ENCODE measurements at regions of chr22 and their contacts with region 1.

Region 1: GRCh38 chr22:31734512-31734911 is 15.4 kb downstream of the PRR14L start:
- DNase-seq: no peak
- H3K4me3 ChIP-seq: no peak overlapping the region
- H3K27ac ChIP-seq: no peak overlapping the region
- H3K4me1 ChIP-seq: no peaks in the 10 kb centered on the region
- H3K27me3 ChIP-seq: no peaks in the 10 kb centered on the region
- CTCF ChIP-seq: no peak

Region 2: GRCh38 chr22:31399211-31400028 is 335.1 kb before region 1 on chr22 and contains the start of gene DRG1:
- CTCF ChIA-PET with region 1: no interaction called
- POLR2A ChIA-PET with region 1: no interaction called
- intact Hi-C with region 1: no loop called
- DNase-seq: peak; percentile 98
- H3K4me3 ChIP-seq: peak within 1 kb of the TSS; percentile 91
- H3K27ac ChIP-seq: peak within 1 kb of the TSS; percentile 94
- H3K4me1 ChIP-seq: peaks cover 6% of the 10 kb centered on the region
- H3K27me3 ChIP-seq: no peaks in the 10 kb centered on the region
- CTCF ChIP-seq: no peak
- total RNA-seq, gene DRG1: 115 and 116 TPM in 2 replicates

Region 3: DNA sequence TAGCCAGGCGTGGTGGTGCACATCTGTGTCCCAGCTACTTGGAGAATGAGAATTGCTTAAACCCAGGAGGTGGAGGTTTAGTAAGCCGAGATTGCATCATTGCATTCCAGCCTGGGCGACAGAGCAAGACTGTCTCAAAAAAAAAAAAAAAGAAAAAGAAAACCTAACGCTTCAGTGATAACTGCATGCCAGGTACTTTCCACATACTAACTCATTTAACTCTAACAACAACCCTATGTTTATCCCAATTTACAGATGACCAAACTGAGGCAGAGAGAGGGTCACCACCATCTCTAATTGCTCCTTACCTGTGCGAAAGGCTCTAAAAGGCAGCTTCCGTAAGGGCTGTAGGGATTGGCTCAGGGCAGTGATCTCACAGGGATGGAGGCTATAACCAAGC is 84.1 kb before region 1 on chr22:
- CTCF ChIA-PET with region 1: interaction called, 10 read pairs
- POLR2A ChIA-PET with region 1: no interaction called
- intact Hi-C with region 1: no loop called
- DNase-seq: no peak
- H3K4me3 ChIP-seq: no peak overlapping the region
- H3K27ac ChIP-seq: no peak overlapping the region
- H3K4me1 ChIP-seq: no peaks in the 10 kb centered on the region
- H3K27me3 ChIP-seq: no peaks in the 10 kb centered on the region
- CTCF ChIP-seq: no peak

Region 4: GRCh38 chr22:31692186-31692886 is 42.2 kb before region 1 on chr22:
- CTCF ChIA-PET with region 1: no interaction called
- POLR2A ChIA-PET with region 1: interaction called, 12 read pairs
- intact Hi-C with region 1: no loop called
- DNase-seq: no peak
- H3K4me3 ChIP-seq: no peak overlapping the region
- H3K27ac ChIP-seq: no peak overlapping the region
- H3K4me1 ChIP-seq: no peaks in the 10 kb centered on the region
- H3K27me3 ChIP-seq: no peaks in the 10 kb centered on the region
- CTCF ChIP-seq: no peak

Measured in A673 (cell line).